CD4-positive, alpha-beta memory T cell (primary cell): ENCODE measurements at regions of chr18 and their contacts with region 1.

Region 1: GRCh38 chr18:53603276-53603675 is 621.2 kb downstream of the MBD2 start:
- DNase-seq: no peak
- H3K4me3 ChIP-seq: no peak overlapping the region
- H3K4me3 Mint-ChIP-seq: no peak overlapping the region
- H3K27ac ChIP-seq: no peak overlapping the region
- H3K27ac Mint-ChIP-seq: peak overlapping the region in 1 of 7 donors; percentile 8
- H3K4me1 ChIP-seq: no peaks in the 10 kb centered on the region
- H3K4me1 Mint-ChIP-seq: no peaks in the 10 kb centered on the region
- H3K27me3 ChIP-seq: no peaks in the 10 kb centered on the region
- H3K27me3 Mint-ChIP-seq: no peaks in the 10 kb centered on the region

Region 2: DNA sequence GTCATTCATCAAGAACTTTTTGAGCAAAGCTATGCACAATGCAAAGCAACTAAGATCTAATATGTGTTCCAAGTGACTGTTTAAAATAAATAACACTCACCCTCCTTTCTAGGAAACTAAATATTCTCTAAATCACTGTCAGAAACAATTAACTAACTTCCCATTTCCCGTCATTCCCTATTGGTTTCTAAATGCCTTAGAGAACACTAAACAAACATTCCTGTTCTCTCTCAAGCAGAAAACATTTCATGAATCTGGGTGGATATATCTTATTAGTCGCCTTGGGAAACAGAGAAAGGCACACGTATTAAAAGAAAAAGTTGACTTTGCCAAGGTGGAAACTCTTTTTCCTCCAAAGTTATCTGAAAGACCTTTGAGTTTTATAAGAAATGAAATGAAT is 114.0 kb before region 1 on chr18:
- CTCF ChIA-PET with region 1: no interaction called
- POLR2A ChIA-PET with region 1: no interaction called
- intact Hi-C with region 1: no loop called
- DNase-seq: no peak
- H3K4me3 ChIP-seq: no peak overlapping the region
- H3K4me3 Mint-ChIP-seq: no peak overlapping the region
- H3K27ac ChIP-seq: no peak overlapping the region
- H3K27ac Mint-ChIP-seq: no peak overlapping the region
- H3K4me1 ChIP-seq: no peaks in the 10 kb centered on the region
- H3K4me1 Mint-ChIP-seq: no peaks in the 10 kb centered on the region
- H3K27me3 ChIP-seq: no peaks in the 10 kb centered on the region
- H3K27me3 Mint-ChIP-seq: no peaks in the 10 kb centered on the region

Region 3: GRCh38 chr18:53567929-53568574 is 35.2 kb before region 1 on chr18:
- CTCF ChIA-PET with region 1: no interaction called
- POLR2A ChIA-PET with region 1: no interaction called
- intact Hi-C with region 1: no loop called
- DNase-seq: peak in 4 of 5 donors; percentile 2 to 24 (median 11)
- H3K4me3 ChIP-seq: no peak overlapping the region
- H3K4me3 Mint-ChIP-seq: no peak overlapping the region
- H3K27ac ChIP-seq: no peak overlapping the region
- H3K27ac Mint-ChIP-seq: no peak overlapping the region
- H3K4me1 ChIP-seq: no peaks in the 10 kb centered on the region
- H3K4me1 Mint-ChIP-seq: no peaks in the 10 kb centered on the region
- H3K27me3 ChIP-seq: no peaks in the 10 kb centered on the region
- H3K27me3 Mint-ChIP-seq: no peaks in the 10 kb centered on the region

Region 4: GRCh38 chr18:53665701-53666100 is 62.4 kb after region 1 on chr18:
- CTCF ChIA-PET with region 1: no interaction called
- POLR2A ChIA-PET with region 1: no interaction called
- intact Hi-C with region 1: loop called (anchors 10 kb)
- DNase-seq: no peak
- H3K4me3 ChIP-seq: no peak overlapping the region
- H3K4me3 Mint-ChIP-seq: no peak overlapping the region
- H3K27ac ChIP-seq: no peak overlapping the region
- H3K27ac Mint-ChIP-seq: no peak overlapping the region
- H3K4me1 ChIP-seq: no peaks in the 10 kb centered on the region
- H3K4me1 Mint-ChIP-seq: no peaks in the 10 kb centered on the region
- H3K27me3 ChIP-seq: no peaks in the 10 kb centered on the region
- H3K27me3 Mint-ChIP-seq: no peaks in the 10 kb centered on the region

Region 5: DNA sequence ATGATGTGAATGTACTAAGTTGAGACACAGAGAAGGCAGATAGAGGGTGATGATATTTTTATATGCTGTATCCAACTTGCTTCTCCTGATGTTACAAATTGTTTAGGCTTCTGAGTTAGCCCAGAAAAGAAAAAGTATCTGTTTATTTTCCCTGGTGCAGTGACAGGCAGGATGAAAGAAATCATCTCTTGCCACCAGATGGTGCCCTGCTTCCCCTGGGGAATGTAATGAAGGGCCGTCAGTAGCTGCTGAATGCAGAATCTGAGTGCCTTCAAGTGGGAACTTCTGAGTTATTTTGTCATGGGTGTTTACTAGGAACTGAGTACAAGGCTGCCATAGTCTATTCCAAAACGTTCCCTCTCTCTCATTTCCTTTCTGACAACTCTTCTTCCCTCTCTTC is 95.6 kb after region 1 on chr18:
- CTCF ChIA-PET with region 1: no interaction called
- POLR2A ChIA-PET with region 1: no interaction called
- intact Hi-C with region 1: no loop called
- DNase-seq: no peak
- H3K4me3 ChIP-seq: no peak overlapping the region
- H3K4me3 Mint-ChIP-seq: no peak overlapping the region
- H3K27ac ChIP-seq: no peak overlapping the region
- H3K27ac Mint-ChIP-seq: no peak overlapping the region
- H3K4me1 ChIP-seq: no peaks in the 10 kb centered on the region
- H3K4me1 Mint-ChIP-seq: no peaks in the 10 kb centered on the region
- H3K27me3 ChIP-seq: no peaks in the 10 kb centered on the region
- H3K27me3 Mint-ChIP-seq: no peaks in the 10 kb centered on the region